Gastrocnemius medialis (tissue), 4 donors: ENCODE measurements at regions of chr1 and their contacts with region 1.

Region 1: DNA sequence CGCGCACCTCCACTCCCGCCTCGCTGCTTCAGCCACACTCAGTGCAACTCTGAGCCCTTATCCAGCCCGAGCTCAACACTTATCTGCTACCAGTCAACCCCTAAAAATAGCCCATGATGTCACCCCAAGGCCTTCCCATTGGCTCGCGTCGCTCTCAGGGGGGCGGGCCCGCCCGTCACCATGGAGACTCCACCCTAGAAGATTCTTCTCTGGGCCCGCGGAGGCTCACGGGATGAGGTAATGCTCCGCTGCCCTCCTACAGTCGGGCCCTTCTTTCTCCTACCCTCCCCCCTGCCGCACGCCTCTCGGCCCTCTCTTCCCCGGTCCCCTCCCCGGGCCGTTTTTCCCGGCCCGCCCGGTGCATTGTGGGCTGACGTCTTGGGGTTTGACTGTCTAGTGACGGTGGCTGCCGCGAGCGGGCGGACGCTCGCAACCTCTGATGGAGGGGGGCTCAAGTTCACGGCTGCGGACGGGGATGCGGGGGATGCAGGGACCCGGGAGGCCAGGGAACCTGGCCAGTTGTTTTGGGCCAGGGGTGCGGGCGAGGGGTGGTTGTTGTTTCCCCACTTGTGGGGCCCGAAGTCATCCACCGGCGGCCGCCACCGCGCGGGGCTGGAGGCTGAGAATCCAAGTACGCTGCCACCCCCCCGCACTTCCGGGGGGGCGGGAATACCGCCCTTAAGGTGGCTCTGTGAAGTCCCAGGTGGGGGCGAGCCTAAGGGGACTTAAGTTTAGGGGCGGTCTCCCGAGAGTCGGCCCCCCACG is at the start of gene JUN:
- DNase-seq: peak; percentile 99 to 100
- ATAC-seq: peak; percentile 71 to 74
- H3K4me3 ChIP-seq: peak within 1 kb of the TSS; percentile 89 to 97 (median 94)
- H3K27ac ChIP-seq: peak within 1 kb of the TSS; percentile 91 to 100 (median 99)
- H3K4me1 ChIP-seq: peaks cover 14 to 25% of the 10 kb centered on the region in 2 donors
- H3K27me3 ChIP-seq: no peaks in the 10 kb centered on the region
- CTCF ChIP-seq: peak in 1 of 5 experiments; percentile 21
- POLR2A ChIP-seq: peak; percentile 99 to 100
- total RNA-seq, gene JUN: 41.2 to 104 (median 90.8) TPM

Region 2: GRCh38 chr1:58883037-58883887 is 99.1 kb after region 1 on chr1:
- in situ Hi-C with region 1: loop called in 1 of 4 experiments (anchors 25 kb)
- intact Hi-C with region 1: loop called (anchors 5 kb)
- DNase-seq: peak; percentile 74 to 88
- ATAC-seq: peak; percentile 68 to 79
- H3K4me3 ChIP-seq: no peak overlapping the region
- H3K27ac ChIP-seq: peak overlapping the region; percentile 80 to 89 (median 84)
- H3K4me1 ChIP-seq: peaks cover 62 to 67% of the 10 kb centered on the region in 2 donors
- H3K27me3 ChIP-seq: no peaks in the 10 kb centered on the region
- CTCF ChIP-seq: no peak
- POLR2A ChIP-seq: no peak

Region 3: DNA sequence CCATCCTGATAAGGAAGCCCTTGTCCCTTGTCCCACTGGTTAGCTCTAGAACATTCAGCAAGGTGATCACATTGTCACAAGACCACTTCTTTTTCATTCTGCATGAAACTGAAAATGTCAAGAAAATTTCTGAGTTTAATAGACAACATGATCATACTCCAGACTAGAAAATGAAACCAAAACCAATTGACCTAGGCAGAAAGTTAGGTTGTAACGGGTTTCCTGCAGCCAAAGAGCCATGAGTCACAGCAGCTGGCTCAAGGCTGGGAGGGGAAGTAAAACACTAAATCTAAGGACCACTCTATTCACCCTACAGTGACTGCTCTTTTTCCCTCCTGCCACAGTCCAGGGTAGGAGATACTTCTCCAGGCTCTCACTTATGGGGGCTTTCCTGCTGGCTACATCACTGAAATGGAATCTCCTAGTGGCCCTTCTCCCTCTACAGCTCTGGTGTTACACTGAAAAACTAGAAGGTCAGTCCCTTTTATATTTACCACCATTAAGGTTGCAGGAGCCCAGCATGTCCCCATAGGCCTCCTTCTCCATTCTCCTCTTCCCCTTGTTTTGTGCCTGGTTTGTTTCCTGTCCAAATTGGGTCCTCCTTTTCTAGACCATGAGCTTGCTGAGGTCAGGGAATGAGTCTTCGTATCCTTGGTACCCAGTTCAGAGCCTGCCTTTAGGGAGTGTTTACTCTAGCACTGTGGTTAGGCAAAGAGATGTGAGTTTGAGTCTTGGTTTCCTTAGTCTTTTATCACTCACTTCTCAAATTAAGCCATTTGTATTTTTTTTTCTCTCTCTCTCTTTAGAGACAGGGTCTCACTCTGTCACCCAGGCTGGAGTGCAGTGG is 236.2 kb after region 1 on chr1:
- in situ Hi-C with region 1: no loop called
- intact Hi-C with region 1: loop called (anchors 2 kb)
- DNase-seq: peak; percentile 31 to 69
- ATAC-seq: peak; percentile 72 to 73
- H3K4me3 ChIP-seq: peak overlapping the region; percentile 35 to 48 (median 36)
- H3K27ac ChIP-seq: peak overlapping the region; percentile 93 to 96 (median 95)
- H3K4me1 ChIP-seq: peaks cover 25 to 33% of the 10 kb centered on the region in 2 donors
- H3K27me3 ChIP-seq: no peaks in the 10 kb centered on the region
- CTCF ChIP-seq: no peak
- POLR2A ChIP-seq: no peak

Region 4: DNA sequence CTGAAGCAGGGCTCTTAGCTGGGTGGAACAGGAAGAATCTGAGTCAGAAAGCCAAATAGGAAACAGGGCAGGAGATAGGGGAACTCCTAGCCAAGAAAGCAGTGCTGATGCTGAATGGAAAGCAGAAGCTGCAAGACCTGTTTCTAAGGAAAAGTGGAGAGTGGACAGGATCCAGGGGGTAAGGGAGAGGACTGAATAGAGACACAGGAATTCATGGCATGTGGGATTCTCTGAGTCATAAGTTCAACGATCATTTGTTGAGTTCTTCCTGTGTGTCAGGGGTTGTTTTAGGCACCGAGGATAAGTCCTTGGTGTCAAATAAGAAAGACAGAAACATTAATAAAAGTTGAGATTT is 358.9 kb after region 1 on chr1:
- in situ Hi-C with region 1: no loop called
- intact Hi-C with region 1: loop called (anchors 10 kb)
- DNase-seq: no peak
- ATAC-seq: peak in 1 of 2 donors; percentile 23
- H3K4me3 ChIP-seq: no peak overlapping the region
- H3K27ac ChIP-seq: peak overlapping the region; percentile 65 to 91 (median 78)
- H3K4me1 ChIP-seq: peaks cover 27 to 45% of the 10 kb centered on the region in 2 donors
- H3K27me3 ChIP-seq: no peaks in the 10 kb centered on the region
- CTCF ChIP-seq: no peak
- POLR2A ChIP-seq: no peak

Region 5: DNA sequence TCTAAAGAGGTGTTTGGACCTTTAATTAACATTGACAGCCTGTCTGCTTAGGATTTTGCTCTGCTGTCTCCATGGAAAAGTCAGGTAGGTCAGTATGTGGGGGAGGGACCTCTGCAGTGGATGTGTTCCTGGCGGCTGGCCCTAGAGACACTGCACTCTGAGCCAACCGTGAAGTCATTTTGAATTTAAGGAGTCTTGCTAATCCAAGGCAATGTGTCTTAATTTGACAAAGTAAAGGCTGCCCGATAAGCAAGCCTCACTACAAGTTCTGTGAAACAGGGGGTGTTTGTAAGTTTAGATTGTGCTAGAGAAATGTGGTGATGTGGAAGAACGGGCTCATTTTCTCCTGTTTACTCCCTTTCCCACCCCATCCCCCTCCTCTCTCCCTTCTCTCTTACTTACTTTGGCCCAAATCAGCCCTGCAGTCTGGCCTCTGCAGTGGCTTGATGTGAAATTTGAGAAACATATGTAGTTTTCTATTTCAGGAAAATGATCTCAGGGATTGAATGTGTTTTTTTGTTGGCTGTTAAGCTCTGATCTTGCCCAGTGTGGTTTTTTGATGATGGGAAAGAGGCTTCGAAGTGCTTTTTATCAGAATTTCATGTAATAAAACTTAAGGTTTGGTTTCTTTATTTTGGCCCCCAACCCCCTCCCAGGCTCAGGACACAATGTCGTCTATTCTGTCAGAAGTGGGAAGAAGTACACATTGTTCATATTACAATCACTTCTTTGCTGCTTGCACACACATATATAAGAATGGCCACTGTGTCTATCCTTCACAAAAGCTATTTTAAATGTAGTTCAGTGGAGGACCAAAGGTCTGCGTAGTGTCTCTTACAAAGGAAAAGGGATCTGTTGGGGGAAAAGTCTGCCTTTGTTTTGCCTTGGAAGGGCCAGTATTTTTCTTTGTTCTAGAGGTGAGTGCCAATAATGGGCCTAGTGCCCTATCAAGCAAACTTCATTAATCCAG is 609.3 kb after region 1 on chr1:
- in situ Hi-C with region 1: no loop called
- intact Hi-C with region 1: loop called (anchors 1 kb)
- DNase-seq: peak; percentile 87 to 95
- ATAC-seq: peak; percentile 93 to 94
- H3K4me3 ChIP-seq: peak overlapping the region; percentile 3 to 24 (median 21)
- H3K27ac ChIP-seq: peak overlapping the region; percentile 89 to 95 (median 92)
- H3K4me1 ChIP-seq: peaks cover 64 to 67% of the 10 kb centered on the region in 2 donors
- H3K27me3 ChIP-seq: no peaks in the 10 kb centered on the region
- CTCF ChIP-seq: no peak
- POLR2A ChIP-seq: no peak

Region 6: GRCh38 chr1:59520827-59521418 is 736.7 kb after region 1 on chr1:
- in situ Hi-C with region 1: no loop called
- intact Hi-C with region 1: loop called (anchors 5 kb)
- DNase-seq: peak; percentile 4 to 53
- ATAC-seq: peak; percentile 35 to 66
- H3K4me3 ChIP-seq: no peak overlapping the region
- H3K27ac ChIP-seq: peak overlapping the region; percentile 86 to 92 (median 90)
- H3K4me1 ChIP-seq: peaks cover 44 to 56% of the 10 kb centered on the region in 2 donors
- H3K27me3 ChIP-seq: no peaks in the 10 kb centered on the region
- CTCF ChIP-seq: no peak
- POLR2A ChIP-seq: no peak

Region 7: DNA sequence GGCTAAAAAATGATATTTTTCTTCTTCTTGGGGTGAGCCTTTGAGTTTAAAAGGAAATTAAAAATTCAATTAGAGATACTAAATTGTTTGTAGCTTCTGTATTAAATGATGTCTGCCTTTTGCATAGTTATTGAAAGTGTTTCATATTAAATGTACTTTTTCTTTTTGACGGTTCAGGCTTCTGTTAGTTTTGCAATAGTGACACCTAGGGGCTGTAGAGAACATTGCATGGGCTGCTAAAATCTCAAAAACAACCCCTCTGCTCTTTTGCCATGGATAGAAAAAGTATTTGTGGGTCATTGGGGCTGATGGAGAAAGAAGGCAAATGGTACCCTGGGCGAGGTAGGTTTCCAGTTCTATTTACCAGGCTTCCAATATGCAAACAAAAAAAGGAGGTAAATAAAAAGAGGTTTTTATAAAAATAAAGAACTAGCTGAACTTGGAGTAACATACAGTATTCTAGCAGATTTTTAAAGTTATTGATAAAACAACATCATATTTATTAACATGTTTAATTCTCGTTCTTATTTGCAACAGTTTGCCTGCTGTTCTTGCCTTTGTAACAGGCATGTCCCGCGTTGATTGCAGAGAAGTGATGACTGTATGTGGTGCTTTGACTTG is 915.2 kb after region 1 on chr1:
- in situ Hi-C with region 1: loop called in 2 of 4 experiments (anchors 10 kb)
- intact Hi-C with region 1: loop called (anchors 5 kb)
- DNase-seq: no peak
- ATAC-seq: peak; percentile 40 to 56
- H3K4me3 ChIP-seq: peak overlapping the region in 1 of 4 donors; percentile 12
- H3K27ac ChIP-seq: peak overlapping the region; percentile 71 to 77 (median 74)
- H3K4me1 ChIP-seq: peaks cover 53 to 59% of the 10 kb centered on the region in 2 donors
- H3K27me3 ChIP-seq: no peaks in the 10 kb centered on the region
- CTCF ChIP-seq: peak; percentile 86 to 97 (median 93)
- POLR2A ChIP-seq: no peak